HepG2 (cell line): ENCODE measurements at regions of chr17 and their contacts with region 1.

Region 1: DNA sequence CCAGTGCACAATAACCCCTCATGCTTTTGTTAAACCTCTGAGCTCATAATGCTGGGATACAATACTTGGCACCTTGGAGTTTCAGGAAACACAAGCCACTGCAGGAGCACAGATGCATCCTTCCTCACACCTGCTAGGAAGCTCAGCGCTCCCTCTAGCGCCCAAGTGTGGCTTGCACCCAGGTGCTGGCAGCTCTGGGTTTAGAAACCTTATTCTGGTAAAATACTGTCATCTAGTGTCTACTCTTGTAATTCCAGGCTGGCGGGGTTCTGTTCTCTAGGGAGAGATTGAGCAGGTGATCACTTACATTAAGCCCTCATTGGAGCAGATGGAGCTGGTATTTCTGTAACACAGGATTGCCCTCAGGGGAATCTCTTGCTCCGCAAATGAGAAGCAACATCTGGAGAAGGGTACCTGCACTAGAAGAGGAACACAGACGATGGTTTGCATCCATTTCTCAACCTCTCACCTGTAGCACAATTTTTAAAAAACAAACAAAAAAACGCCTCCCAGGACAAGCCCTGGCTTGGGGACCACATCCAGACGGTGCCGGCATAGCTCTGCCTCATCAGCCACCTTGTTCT is 1.5 kb downstream of the CCL1 start:
- DNase-seq: peak; percentile 78
- ATAC-seq: peak; percentile 97
- H3K4me3 ChIP-seq: no peak overlapping the region
- H3K27ac ChIP-seq: no peak overlapping the region
- H3K4me1 ChIP-seq: no peaks in the 10 kb centered on the region
- H3K27me3 ChIP-seq: no peaks in the 10 kb centered on the region
- CTCF ChIP-seq: peak; percentile 94
- EP300 ChIP-seq: no peak
- POLR2A ChIP-seq: no peak
- RAD21 ChIP-seq: peak; percentile 95

Region 2: DNA sequence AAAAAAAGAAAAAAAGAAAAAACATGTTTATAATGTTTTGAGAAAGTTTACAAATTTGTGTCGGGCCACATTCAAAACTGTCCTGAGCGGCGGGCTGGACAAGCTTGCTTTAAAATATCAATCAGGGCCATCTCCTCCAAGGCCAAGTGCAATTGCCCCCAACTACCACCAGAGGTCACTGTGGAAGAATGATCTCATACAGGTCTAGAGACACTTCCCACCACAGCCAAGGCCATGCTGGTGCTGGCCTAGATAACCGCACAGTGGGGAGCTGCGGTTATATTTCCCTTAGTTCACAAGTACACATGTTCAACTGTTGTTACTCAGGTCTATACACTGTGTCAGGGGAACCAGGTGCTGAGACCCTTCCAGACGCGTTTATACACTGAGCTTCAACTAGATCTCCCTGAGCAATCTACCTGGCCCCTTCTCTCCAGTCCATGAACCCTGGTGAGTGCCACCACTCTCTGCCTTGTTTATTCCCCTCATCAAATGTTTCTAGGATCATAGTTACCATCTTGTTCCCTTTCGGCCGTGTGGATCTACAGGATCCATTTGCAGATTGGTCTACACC is 190.2 kb before region 1 on chr17:
- CTCF ChIA-PET with region 1: interaction called, 9 read pairs
- POLR2A ChIA-PET with region 1: no interaction called
- in situ Hi-C with region 1: no loop called
- intact Hi-C with region 1: loop called (anchors 1 kb)
- DNase-seq: peak; percentile 65
- ATAC-seq: peak; percentile 84
- H3K4me3 ChIP-seq: no peak overlapping the region
- H3K27ac ChIP-seq: no peak overlapping the region
- H3K4me1 ChIP-seq: no peaks in the 10 kb centered on the region
- H3K27me3 ChIP-seq: no peaks in the 10 kb centered on the region; a peak in 1 of 5 replicates
- CTCF ChIP-seq: peak; percentile 66
- EP300 ChIP-seq: no peak
- POLR2A ChIP-seq: no peak
- RAD21 ChIP-seq: no peak

Region 3: DNA sequence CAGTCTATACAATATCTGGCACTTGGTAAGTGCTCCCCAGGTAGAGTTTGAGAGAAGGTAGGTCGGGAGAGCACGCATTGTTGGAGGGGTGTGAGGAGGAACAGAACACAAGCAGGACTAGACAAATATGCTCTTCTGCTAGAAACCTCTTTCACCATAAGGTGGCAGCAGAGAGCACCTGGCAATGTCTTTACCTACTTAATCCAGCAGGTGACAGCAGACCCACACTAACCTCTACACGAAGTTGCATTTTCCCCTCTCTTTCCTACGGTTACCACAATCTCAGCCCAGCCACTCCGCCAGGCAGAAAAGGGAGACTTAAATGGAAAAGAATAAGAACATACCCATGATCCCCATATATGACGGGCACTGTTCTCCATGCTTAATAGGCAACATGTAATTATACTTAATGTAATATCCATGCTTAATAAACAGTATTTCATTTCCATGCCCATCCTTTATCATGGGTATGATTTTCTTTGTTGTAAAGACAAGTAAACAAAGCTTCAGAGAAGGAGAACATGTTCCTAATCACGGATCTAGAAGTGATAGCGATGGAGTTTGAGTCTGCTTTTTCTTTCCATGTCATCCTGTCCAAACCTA is 161.5 kb before region 1 on chr17:
- CTCF ChIA-PET with region 1: interaction called, 246 read pairs
- POLR2A ChIA-PET with region 1: no interaction called
- in situ Hi-C with region 1: loop called (anchors 5 kb)
- intact Hi-C with region 1: no loop called
- DNase-seq: peak; percentile 76
- ATAC-seq: peak; percentile 83
- H3K4me3 ChIP-seq: no peak overlapping the region
- H3K27ac ChIP-seq: no peak overlapping the region
- H3K4me1 ChIP-seq: no peaks in the 10 kb centered on the region
- H3K27me3 ChIP-seq: no peaks in the 10 kb centered on the region
- CTCF ChIP-seq: peak; percentile 96
- EP300 ChIP-seq: no peak
- POLR2A ChIP-seq: no peak
- RAD21 ChIP-seq: peak; percentile 93